ENCODE measurements at regions of chr14 and their contacts with region 1.

Region 1: DNA sequence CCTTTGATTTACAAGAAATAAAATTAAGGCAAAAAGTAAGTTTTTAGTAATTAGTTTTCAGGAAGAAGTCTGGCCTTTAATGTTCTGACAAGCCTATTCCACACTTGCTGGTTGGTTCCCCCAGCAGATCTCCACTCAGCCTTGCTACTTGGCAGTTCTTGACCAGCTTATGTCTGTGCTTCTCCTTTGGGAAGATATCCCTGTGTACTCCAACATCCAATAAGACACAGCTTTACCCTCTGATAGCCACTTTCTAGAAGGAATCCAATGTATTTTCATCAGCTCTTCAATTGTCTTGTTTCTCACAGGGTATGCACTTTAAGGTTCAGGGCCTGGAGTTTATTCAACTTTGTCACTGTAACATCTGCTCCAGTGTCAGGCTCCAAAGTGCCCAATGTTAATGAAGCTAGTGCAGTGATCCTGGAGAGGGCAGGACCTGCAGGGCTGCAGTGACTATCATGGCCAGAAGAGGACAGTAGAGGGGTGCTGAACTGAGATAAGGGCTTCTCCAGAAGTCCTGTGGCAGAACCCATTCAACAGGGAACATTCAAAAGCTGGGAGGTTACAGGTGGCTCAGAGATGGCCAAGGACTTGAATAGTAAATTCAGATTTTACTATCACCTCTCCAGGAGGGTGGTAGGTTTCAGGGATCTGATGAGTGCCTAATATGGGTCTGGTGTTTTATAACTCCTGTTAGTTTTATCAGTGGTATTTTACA is 22.9 kb downstream of the JKAMP start:
- DNase-seq: peak; percentile 62
- H3K4me3 Mint-ChIP-seq: no peak overlapping the region
- H3K27ac Mint-ChIP-seq: no peak overlapping the region
- H3K4me1 Mint-ChIP-seq: no peaks in the 10 kb centered on the region
- H3K27me3 Mint-ChIP-seq: no peaks in the 10 kb centered on the region
- CTCF ChIP-seq: peak; percentile 43

Region 2: GRCh38 chr14:59520224-59520623 is 13.0 kb after region 1 on chr14:
- CTCF ChIA-PET with region 1: no interaction called
- intact Hi-C with region 1: no loop called
- DNase-seq: no peak
- H3K4me3 Mint-ChIP-seq: no peak overlapping the region
- H3K27ac Mint-ChIP-seq: no peak overlapping the region
- H3K4me1 Mint-ChIP-seq: no peaks in the 10 kb centered on the region
- H3K27me3 Mint-ChIP-seq: peaks cover 16% of the 10 kb centered on the region
- CTCF ChIP-seq: no peak

Region 3: DNA sequence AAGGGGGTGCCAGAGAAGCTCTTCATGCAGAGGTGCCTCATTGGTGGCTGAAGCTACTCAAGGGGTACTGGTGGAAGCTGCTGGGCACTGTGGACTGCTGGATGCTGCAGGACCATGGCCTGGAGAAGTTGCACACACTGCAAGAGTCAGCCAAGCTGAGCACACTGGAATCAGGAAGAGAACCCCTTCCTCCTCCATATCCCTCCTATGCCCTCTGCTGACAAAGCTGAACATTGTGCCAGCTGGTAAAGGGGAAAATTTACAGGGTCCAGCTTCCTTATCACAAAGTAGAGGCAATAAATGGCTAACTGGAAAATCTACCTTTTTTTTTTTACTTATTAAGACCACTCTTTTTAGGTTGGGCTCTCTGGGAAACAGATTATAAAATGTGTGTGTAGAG is 62.9 kb after region 1 on chr14:
- CTCF ChIA-PET with region 1: interaction called, 12 read pairs
- intact Hi-C with region 1: no loop called
- DNase-seq: peak; percentile 12
- H3K4me3 Mint-ChIP-seq: no peak overlapping the region
- H3K27ac Mint-ChIP-seq: no peak overlapping the region
- H3K4me1 Mint-ChIP-seq: no peaks in the 10 kb centered on the region
- H3K27me3 Mint-ChIP-seq: peaks cover 22% of the 10 kb centered on the region
- CTCF ChIP-seq: no peak

Region 4: GRCh38 chr14:59576332-59577294 is 69.4 kb after region 1 on chr14 and contains the start of gene CCDC175:
- CTCF ChIA-PET with region 1: interaction called, 8 read pairs
- intact Hi-C with region 1: loop called (anchors 2 kb)
- DNase-seq: peak; percentile 92
- H3K4me3 Mint-ChIP-seq: peak within 1 kb of the TSS; percentile 80
- H3K27ac Mint-ChIP-seq: peak within 1 kb of the TSS; percentile 36
- H3K4me1 Mint-ChIP-seq: no peaks in the 10 kb centered on the region
- H3K27me3 Mint-ChIP-seq: no peaks in the 10 kb centered on the region
- CTCF ChIP-seq: peak; percentile 78
- total RNA-seq, gene CCDC175: not detected in 2 replicates

Region 5: DNA sequence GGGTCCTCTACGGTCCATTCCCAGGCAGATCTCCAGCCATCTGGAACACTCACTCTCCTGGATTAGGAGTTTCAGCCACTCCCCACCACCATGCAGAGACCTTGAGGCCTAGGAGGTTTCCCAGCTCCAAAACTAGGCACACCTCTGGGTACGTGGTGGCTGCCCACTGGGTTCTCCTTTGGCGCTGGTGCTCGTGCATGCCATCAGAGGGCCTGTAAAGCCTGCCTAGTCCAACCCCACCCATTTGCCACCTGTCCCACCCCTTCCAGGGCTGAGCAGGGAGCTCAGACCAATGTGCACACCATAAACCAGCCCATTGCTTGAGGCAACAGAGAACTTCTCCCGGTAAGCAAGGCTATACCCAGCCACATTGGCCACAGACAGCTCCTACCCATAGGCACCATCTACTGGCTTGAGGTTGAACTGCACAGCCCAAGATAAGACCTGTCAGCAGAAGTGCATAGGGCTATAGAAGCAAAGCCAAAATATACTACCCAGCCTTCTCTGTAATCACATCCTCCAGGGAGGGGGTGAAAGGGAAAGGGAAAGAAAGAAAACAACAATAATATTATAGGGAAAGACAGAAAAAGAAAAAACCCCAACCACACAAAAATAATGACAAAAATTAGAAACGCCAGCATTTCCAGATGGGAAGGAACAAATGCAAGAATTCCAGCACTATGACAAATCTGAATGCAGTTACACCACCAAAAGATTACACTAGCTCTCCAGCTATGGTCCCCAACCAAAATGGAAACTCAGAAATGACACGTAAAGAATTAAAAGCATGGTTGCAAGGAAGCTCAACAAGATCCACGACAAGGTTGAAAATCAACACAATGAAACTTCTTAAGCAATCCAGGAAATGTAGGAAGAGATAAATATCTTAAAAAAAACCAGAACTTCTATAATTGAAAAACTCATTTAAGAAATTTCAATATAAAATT is 181.3 kb after region 1 on chr14:
- CTCF ChIA-PET with region 1: interaction called, 4 read pairs
- intact Hi-C with region 1: loop called (anchors 5 kb)
- DNase-seq: peak; percentile 53
- H3K4me3 Mint-ChIP-seq: no peak overlapping the region
- H3K27ac Mint-ChIP-seq: no peak overlapping the region
- H3K4me1 Mint-ChIP-seq: no peaks in the 10 kb centered on the region
- H3K27me3 Mint-ChIP-seq: no peaks in the 10 kb centered on the region
- CTCF ChIP-seq: peak; percentile 36

Region 6: DNA sequence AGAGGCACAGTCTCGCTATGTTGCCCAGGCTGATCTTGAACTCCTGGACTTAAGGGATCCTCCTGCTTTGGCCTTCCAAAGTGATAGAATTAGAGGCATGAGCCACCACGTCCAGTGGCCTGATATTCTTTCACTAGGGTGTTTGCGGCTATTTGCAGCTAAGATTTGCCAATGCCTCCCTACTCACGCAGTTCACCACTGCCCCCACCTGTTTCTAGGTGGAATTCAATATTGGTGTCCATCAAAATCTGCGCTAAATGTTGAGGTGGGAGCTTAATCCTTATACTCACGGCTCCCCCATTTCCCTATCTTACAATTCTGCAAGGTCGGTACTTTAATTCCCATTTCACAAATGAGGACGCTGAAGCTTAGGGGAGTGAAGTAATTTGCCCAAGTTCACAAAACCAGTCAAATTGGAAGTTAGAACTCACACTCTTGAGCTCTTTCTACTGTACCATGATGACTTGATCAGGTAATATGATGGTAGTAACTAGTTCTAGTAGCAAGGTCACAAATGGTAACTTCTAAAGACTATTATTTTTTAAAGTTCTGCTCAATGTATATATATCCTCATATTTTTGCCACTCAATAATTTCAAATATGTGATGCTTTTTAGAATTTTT is 390.6 kb after region 1 on chr14:
- CTCF ChIA-PET with region 1: interaction called, 4 read pairs
- intact Hi-C with region 1: loop called (anchors 5 kb)
- DNase-seq: peak; percentile 42
- H3K4me3 Mint-ChIP-seq: no peak overlapping the region
- H3K27ac Mint-ChIP-seq: no peak overlapping the region
- H3K4me1 Mint-ChIP-seq: no peaks in the 10 kb centered on the region
- H3K27me3 Mint-ChIP-seq: peaks cover 9% of the 10 kb centered on the region
- CTCF ChIP-seq: peak; percentile 21

Region 7: DNA sequence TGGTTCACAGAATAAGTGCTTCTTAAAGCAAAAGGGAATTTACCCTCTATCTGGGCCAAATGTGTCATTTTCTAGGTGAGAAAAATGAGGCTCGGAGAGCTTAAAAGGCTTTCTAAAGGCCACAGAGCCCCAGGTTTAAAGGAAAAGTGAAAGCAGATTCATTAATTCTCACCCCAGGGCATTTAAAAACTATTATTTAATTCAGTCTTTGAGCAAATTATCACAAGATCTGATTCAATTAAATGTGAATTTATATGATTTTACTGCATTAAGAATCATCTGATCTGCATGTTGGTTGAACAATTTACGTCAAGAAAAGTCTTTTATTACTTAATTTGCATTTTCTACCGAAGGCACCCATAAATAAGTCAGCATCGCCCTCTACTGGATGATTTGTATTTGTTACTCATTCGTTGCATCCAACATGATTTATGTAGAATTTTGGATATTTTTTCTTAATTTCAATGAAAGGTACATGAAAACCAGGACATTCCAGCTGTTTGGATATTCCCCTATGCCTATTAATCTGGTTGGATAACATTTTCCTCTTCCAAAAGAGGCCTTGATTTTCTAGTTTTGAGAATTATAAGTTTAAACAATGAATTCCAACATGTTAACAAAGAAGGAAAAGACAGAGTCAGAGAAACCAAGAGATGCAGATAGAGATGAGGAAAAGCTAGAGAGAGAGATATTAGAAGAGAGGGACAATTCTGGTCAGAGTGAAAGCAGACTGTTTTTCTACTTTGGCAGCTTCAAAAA is 677.1 kb after region 1 on chr14:
- CTCF ChIA-PET with region 1: no interaction called
- intact Hi-C with region 1: loop called (anchors 10 kb)
- DNase-seq: peak; percentile 36
- H3K4me3 Mint-ChIP-seq: no peak overlapping the region
- H3K27ac Mint-ChIP-seq: no peak overlapping the region
- H3K4me1 Mint-ChIP-seq: no peaks in the 10 kb centered on the region
- H3K27me3 Mint-ChIP-seq: no peaks in the 10 kb centered on the region
- CTCF ChIP-seq: peak; percentile 29

Measured in Calu3 (cell line).